ENCODE measurements at regions of chr12 and their contacts with region 1.

Region 1: GRCh38 chr12:118120579-118121363 is 15.2 kb upstream of the PEBP1 start:
- DNase-seq: peak; percentile 77
- ATAC-seq: peak; percentile 87 to 91

Region 2: DNA sequence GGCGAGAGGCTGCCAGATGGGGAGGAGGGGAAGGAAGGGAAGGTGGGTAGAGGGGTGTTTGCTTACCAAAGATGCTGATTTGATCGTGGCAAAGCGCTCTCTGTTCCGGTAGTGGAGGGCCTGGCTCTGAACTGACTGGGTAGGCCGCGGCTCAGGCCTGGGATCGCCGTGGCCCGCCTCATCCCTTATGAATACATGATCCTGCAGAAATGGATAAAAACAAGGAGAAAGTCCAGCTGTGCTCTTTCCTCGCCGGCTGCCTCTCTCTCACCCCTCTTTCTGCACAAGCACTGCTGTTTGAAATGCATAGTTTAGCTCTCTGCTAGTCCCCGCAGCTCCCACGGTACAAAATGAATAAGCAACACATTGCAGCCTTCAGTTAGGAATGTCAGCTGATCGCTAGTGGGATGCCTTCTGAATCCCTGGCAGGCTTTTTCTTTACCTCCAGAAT is 69.0 kb after region 1 on chr12:
- intact Hi-C with region 1: loop called in 1 of 2 experiments (anchors 10 kb)
- DNase-seq: peak; percentile 28
- ATAC-seq: peak; percentile 71 to 82